ENCODE measurements at regions of chr10 and their contacts with region 1.

Region 1: GRCh38 chr10:49518982-49519578 is 19.8 kb downstream of the ERCC6 start:
- DNase-seq: peak; percentile 21
- H3K4me3 Mint-ChIP-seq: no peak overlapping the region
- H3K27ac Mint-ChIP-seq: no peak overlapping the region
- H3K4me1 Mint-ChIP-seq: no peaks in the 10 kb centered on the region
- H3K27me3 Mint-ChIP-seq: no peaks in the 10 kb centered on the region

Region 2: GRCh38 chr10:49164559-49165188 is 354.4 kb before region 1 on chr10:
- CTCF ChIA-PET with region 1: no interaction called
- POLR2A ChIA-PET with region 1: no interaction called
- intact Hi-C with region 1: loop called (anchors 5 kb)
- DNase-seq: peak; percentile 60
- H3K4me3 Mint-ChIP-seq: no peak overlapping the region
- H3K27ac Mint-ChIP-seq: peak overlapping the region; percentile 14
- H3K4me1 Mint-ChIP-seq: peaks cover 41% of the 10 kb centered on the region
- H3K27me3 Mint-ChIP-seq: peaks cover 6% of the 10 kb centered on the region

Region 3: DNA sequence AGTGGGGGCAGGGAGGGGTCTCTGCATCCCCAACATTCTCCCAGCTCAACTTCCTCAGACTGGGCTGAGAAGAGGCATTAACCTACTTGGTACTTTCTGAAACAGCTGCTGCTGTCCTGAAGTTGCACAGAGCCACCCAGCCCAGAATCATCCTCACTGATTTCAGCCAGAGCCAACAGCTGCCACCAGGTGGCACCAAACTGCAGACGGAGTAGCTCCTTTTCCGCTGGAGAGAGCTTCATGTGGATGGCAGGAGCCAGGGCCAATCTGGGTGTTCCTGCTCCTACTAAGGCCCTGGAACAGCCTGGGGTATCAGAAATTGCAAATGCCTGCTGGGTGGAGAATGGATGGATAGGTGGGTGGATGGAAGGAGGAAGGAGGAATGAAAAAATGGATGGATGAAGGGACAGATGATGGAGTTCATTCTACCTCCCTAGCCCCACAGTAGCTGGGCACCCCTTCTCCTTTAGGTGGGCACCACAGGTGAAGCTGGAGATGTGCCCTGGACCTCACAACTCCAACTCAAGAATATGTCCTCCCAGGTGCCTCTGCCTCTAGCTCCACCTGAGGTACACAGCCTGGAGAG is 111.4 kb before region 1 on chr10:
- CTCF ChIA-PET with region 1: interaction called, 45 read pairs
- POLR2A ChIA-PET with region 1: no interaction called
- intact Hi-C with region 1: loop called (anchors 1 kb)
- DNase-seq: peak; percentile 79
- H3K4me3 Mint-ChIP-seq: no peak overlapping the region
- H3K27ac Mint-ChIP-seq: no peak overlapping the region
- H3K4me1 Mint-ChIP-seq: no peaks in the 10 kb centered on the region
- H3K27me3 Mint-ChIP-seq: peaks cover 27% of the 10 kb centered on the region

Region 4: DNA sequence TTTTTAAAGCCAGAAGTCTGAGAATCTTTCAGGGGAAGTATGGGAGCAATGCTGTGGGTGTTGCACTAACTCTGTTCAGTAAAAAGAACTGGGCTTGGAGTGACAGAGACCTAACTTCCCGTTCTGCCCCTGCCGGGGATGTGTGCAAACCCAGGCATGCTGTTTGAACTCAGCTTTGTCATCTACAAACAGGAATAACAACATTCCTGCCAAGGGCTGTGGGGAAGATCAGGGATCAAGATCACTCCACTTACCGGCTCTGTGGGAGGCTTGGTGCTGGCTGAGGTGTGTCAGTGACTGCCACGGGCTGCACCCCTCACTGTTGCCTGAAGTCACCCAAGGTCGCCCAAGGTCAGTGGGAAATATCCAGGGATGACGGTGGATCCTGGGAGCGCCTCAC is 100.1 kb before region 1 on chr10:
- CTCF ChIA-PET with region 1: no interaction called
- POLR2A ChIA-PET with region 1: no interaction called
- intact Hi-C with region 1: no loop called
- DNase-seq: no peak
- H3K4me3 Mint-ChIP-seq: no peak overlapping the region
- H3K27ac Mint-ChIP-seq: no peak overlapping the region
- H3K4me1 Mint-ChIP-seq: no peaks in the 10 kb centered on the region
- H3K27me3 Mint-ChIP-seq: peaks cover 16% of the 10 kb centered on the region

Region 5: GRCh38 chr10:49474901-49475300 is 44.2 kb before region 1 on chr10:
- CTCF ChIA-PET with region 1: no interaction called
- POLR2A ChIA-PET with region 1: no interaction called
- intact Hi-C with region 1: no loop called
- DNase-seq: no peak
- H3K4me3 Mint-ChIP-seq: no peak overlapping the region
- H3K27ac Mint-ChIP-seq: no peak overlapping the region
- H3K4me1 Mint-ChIP-seq: no peaks in the 10 kb centered on the region
- H3K27me3 Mint-ChIP-seq: no peaks in the 10 kb centered on the region

Region 6: GRCh38 chr10:49538381-49539319 is 19.6 kb after region 1 on chr10 and contains the start of gene ERCC6:
- CTCF ChIA-PET with region 1: interaction called, 10 read pairs
- POLR2A ChIA-PET with region 1: no interaction called
- intact Hi-C with region 1: no loop called
- DNase-seq: peak; percentile 98
- H3K4me3 Mint-ChIP-seq: peak within 1 kb of the TSS; percentile 89
- H3K27ac Mint-ChIP-seq: peak within 1 kb of the TSS; percentile 95
- H3K4me1 Mint-ChIP-seq: peaks cover 34% of the 10 kb centered on the region
- H3K27me3 Mint-ChIP-seq: peaks cover 24% of the 10 kb centered on the region
- total RNA-seq, gene ERCC6: 17.5 to 18.8 TPM

Region 7: GRCh38 chr10:49562893-49563292 is 43.8 kb after region 1 on chr10:
- CTCF ChIA-PET with region 1: no interaction called
- POLR2A ChIA-PET with region 1: no interaction called
- intact Hi-C with region 1: no loop called
- DNase-seq: no peak
- H3K4me3 Mint-ChIP-seq: no peak overlapping the region
- H3K27ac Mint-ChIP-seq: no peak overlapping the region
- H3K4me1 Mint-ChIP-seq: no peaks in the 10 kb centered on the region
- H3K27me3 Mint-ChIP-seq: peaks cover 26% of the 10 kb centered on the region